CD8-positive, alpha-beta T cell (primary cell): ENCODE measurements at regions of chr2 and their contacts with region 1.

Region 1: DNA sequence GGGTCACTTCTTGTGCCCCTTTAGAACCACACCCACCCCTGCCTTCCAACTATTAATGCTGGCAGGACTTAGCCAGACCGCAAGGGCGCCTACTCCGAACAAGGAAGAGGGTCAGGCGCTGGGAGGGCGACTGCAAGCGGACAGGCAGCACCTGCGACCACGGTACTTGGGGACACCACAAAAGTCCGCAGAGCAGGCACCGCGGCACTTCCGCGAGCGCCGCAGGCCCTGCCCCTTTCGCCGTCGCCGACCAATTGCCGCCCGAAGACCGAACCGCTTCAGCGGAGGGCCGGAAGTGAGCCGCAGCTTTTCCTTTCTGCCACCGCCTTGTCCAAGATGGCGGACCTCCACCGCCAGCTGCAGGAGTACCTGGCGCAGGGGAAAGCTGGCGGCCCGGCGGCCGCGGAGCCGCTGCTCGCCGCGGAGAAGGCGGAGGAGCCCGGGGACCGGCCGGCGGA is at the start of gene SFT2D3:
- DNase-seq: peak; percentile 80 to 95 (median 89)
- ATAC-seq: peak; percentile 72
- H3K4me3 ChIP-seq: peak within 1 kb of the TSS; percentile 75 to 98
- H3K4me3 Mint-ChIP-seq: peak within 1 kb of the TSS; percentile 93
- H3K27ac ChIP-seq: peak within 1 kb of the TSS; percentile 92 to 96
- H3K27ac Mint-ChIP-seq: peak within 1 kb of the TSS; percentile 99
- H3K4me1 ChIP-seq: peaks cover 39% of the 10 kb centered on the region
- H3K4me1 Mint-ChIP-seq: peaks cover 46% of the 10 kb centered on the region
- H3K27me3 ChIP-seq: no peaks in the 10 kb centered on the region
- H3K27me3 Mint-ChIP-seq: no peaks in the 10 kb centered on the region
- CTCF ChIP-seq: no peak
- total RNA-seq, gene SFT2D3: 8.2 to 8.5 TPM

Region 2: GRCh38 chr2:127086990-127087790 is 614.0 kb before region 1 on chr2:
- CTCF ChIA-PET with region 1: no interaction called
- POLR2A ChIA-PET with region 1: no interaction called
- intact Hi-C with region 1: loop called in 1 of 2 experiments (anchors 10 kb)
- DNase-seq: no peak
- ATAC-seq: no peak
- H3K4me3 ChIP-seq: no peak overlapping the region
- H3K4me3 Mint-ChIP-seq: no peak overlapping the region
- H3K27ac ChIP-seq: peak overlapping the region in 1 of 2 experiments; percentile 51
- H3K27ac Mint-ChIP-seq: peak overlapping the region; percentile 84
- H3K4me1 ChIP-seq: peaks cover 53% of the 10 kb centered on the region
- H3K4me1 Mint-ChIP-seq: peaks cover 49% of the 10 kb centered on the region
- H3K27me3 ChIP-seq: no peaks in the 10 kb centered on the region
- H3K27me3 Mint-ChIP-seq: no peaks in the 10 kb centered on the region
- CTCF ChIP-seq: no peak

Region 3: DNA sequence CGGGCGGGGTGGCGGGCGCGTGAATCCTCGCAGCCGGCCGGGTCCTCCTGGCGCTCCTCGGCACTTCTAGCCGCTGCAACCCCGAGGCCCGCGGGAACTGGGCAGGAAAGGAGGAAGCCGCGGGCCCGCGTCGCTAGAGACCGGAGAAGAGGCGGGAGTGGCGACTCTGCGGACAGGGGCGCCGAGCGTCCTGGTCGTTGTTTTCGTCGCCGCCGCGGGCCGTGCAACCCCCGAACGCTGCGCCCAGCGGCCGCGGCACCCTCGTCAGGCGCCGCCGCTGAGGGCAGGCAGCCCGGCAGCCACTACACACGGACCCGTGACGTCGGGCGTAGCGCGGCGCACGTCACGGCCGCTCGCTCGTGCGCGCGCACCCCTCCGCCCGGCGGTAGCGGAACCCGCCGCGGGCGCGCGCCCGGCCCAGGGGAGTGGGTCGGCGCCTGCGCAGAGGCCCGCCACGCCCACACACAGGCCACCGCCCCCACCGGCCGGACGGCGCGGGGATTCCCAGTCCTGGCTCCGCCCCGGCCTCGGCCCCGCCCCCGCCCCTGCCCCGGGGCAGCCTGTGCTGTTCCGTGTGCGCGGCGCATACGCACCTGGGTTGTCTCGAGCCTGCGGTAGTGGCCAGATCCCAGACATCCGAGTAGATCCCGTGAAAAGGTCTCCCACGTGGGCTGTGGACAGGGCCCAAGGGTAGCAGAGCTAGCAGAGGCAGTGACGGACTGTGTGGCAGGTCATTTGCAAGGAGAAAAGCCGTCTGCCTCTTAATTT is 313.4 kb before region 1 on chr2 and contains the start of gene MAP3K2:
- CTCF ChIA-PET with region 1: no interaction called
- POLR2A ChIA-PET with region 1: no interaction called
- intact Hi-C with region 1: loop called (anchors 2 to 5 kb)
- DNase-seq: peak; percentile 90 to 98 (median 97)
- ATAC-seq: peak; percentile 72
- H3K4me3 ChIP-seq: peak within 1 kb of the TSS; percentile 79 to 81
- H3K4me3 Mint-ChIP-seq: peak within 1 kb of the TSS; percentile 86
- H3K27ac ChIP-seq: peak within 1 kb of the TSS; percentile 99
- H3K27ac Mint-ChIP-seq: peak within 1 kb of the TSS; percentile 99
- H3K4me1 ChIP-seq: peaks cover 36% of the 10 kb centered on the region
- H3K4me1 Mint-ChIP-seq: peaks cover 63% of the 10 kb centered on the region
- H3K27me3 ChIP-seq: no peaks in the 10 kb centered on the region
- H3K27me3 Mint-ChIP-seq: no peaks in the 10 kb centered on the region
- CTCF ChIP-seq: no peak
- total RNA-seq, gene MAP3K2: 126 to 137 TPM

Region 4: DNA sequence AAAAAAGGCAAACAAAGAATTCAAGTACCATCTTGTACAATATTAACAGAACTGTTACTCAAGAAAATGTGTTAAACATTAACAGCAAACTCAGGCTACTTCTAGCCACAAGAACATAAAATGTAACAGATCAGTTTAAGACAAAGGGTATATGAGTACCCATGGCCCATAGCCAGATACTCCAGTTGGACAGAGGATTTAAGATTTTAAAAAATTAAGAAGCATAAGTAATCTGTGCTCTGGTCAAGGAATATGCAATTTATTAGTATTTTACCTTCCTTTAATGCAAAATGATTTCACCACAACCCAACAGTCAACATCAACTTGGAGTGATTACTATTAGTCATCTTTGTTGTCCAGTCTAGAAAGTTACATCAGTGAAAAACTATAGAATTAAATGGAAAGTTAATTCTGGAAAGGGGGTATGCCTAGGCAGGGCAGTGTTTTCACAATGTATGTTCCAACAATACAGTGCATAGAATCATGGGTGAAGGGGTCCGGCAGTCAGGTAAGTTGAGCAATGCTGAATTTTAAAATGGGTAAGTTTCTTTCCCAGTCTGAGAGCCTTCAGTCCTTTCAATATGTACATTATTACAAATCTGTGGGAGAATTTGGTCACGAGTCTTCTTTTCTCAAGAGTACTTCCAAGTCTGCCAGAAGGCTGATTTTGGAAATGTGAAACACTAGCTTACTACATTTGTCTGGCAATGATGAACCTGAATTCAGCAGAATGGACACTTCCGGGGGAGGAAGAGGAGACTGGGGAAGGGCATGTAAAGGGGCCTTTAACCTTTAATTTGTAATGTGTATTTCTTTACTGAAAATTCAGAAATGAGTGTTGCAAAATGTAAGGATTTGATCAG is 34.5 kb after region 1 on chr2:
- CTCF ChIA-PET with region 1: no interaction called
- POLR2A ChIA-PET with region 1: no interaction called
- intact Hi-C with region 1: no loop called
- DNase-seq: no peak
- ATAC-seq: no peak
- H3K4me3 ChIP-seq: no peak overlapping the region
- H3K4me3 Mint-ChIP-seq: no peak overlapping the region
- H3K27ac ChIP-seq: no peak overlapping the region
- H3K27ac Mint-ChIP-seq: no peak overlapping the region
- H3K4me1 ChIP-seq: no peaks in the 10 kb centered on the region
- H3K4me1 Mint-ChIP-seq: no peaks in the 10 kb centered on the region
- H3K27me3 ChIP-seq: no peaks in the 10 kb centered on the region
- H3K27me3 Mint-ChIP-seq: no peaks in the 10 kb centered on the region
- CTCF ChIP-seq: no peak

Region 5: GRCh38 chr2:127810619-127811396 is 109.6 kb after region 1 on chr2 and contains the start of gene WDR33:
- CTCF ChIA-PET with region 1: no interaction called
- POLR2A ChIA-PET with region 1: interaction called, 7 read pairs
- intact Hi-C with region 1: loop called (anchors 1 to 2 kb)
- DNase-seq: peak; percentile 87 to 98 (median 95)
- ATAC-seq: peak; percentile 95
- H3K4me3 ChIP-seq: peak within 1 kb of the TSS; percentile 88 to 92
- H3K4me3 Mint-ChIP-seq: peak within 1 kb of the TSS; percentile 92
- H3K27ac ChIP-seq: peak within 1 kb of the TSS; percentile 95 to 98
- H3K27ac Mint-ChIP-seq: peak within 1 kb of the TSS; percentile 98
- H3K4me1 ChIP-seq: peaks cover 42% of the 10 kb centered on the region
- H3K4me1 Mint-ChIP-seq: peaks cover 51% of the 10 kb centered on the region
- H3K27me3 ChIP-seq: no peaks in the 10 kb centered on the region
- H3K27me3 Mint-ChIP-seq: no peaks in the 10 kb centered on the region
- CTCF ChIP-seq: no peak
- total RNA-seq, gene WDR33: 60.3 to 61.0 TPM

Region 6: DNA sequence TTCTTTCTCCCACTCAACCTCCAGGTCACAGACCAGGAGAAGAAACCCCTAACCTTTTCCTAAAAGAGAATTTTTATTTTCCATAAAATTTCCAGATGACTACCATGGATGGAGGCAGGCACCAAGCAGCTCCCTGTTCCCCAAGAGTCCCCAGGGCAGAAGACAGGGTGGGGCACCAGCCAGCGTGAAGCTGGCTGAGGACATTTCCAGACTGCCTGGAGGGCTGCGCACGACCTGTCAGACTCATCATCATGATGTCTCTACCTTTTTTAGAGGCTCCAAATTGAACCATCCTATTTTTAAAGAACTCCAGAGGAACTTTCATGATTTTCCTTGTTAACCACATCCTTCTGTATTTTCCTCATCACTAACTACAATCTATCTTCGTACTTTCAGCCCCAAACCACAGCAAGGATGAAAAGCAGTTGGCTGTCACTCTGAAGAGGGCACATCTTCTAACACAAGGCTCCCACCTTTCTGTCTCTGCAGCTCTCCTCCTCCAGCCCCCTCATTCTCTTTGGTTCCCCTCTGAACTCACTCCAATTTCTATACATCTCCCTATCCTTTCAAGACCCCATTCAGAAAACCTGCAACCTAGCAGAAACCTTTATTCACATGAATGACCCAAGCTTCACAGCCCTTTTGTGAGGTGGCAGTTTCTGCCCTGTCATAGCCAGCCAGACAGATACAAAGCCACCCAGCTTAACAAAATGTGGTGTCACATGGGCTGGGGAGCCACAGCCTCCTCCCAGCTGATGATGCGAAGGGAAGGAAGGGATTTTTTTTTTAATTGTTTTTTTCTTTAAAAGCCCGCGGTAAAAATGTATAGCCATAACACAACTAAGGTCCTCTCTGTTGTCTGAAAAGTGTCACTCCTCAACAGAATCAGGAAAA is 173.4 kb after region 1 on chr2:
- CTCF ChIA-PET with region 1: no interaction called
- POLR2A ChIA-PET with region 1: no interaction called
- intact Hi-C with region 1: loop called in 1 of 2 experiments (anchors 5 kb)
- DNase-seq: peak in 1 of 9 experiments; percentile 29
- ATAC-seq: no peak
- H3K4me3 ChIP-seq: no peak overlapping the region
- H3K4me3 Mint-ChIP-seq: no peak overlapping the region
- H3K27ac ChIP-seq: no peak overlapping the region
- H3K27ac Mint-ChIP-seq: peak overlapping the region; percentile 82
- H3K4me1 ChIP-seq: peaks cover 13% of the 10 kb centered on the region
- H3K4me1 Mint-ChIP-seq: peaks cover 44% of the 10 kb centered on the region
- H3K27me3 ChIP-seq: no peaks in the 10 kb centered on the region
- H3K27me3 Mint-ChIP-seq: no peaks in the 10 kb centered on the region
- CTCF ChIP-seq: no peak

Region 7: GRCh38 chr2:128321784-128322714 is 620.8 kb after region 1 on chr2:
- CTCF ChIA-PET with region 1: no interaction called
- POLR2A ChIA-PET with region 1: no interaction called
- intact Hi-C with region 1: loop called in 1 of 2 experiments (anchors 5 kb)
- DNase-seq: peak; percentile 66 to 89 (median 80)
- ATAC-seq: peak; percentile 68
- H3K4me3 ChIP-seq: peak overlapping the region; percentile 48 to 76
- H3K4me3 Mint-ChIP-seq: peak overlapping the region; percentile 74
- H3K27ac ChIP-seq: peak overlapping the region in 1 of 2 experiments; percentile 35
- H3K27ac Mint-ChIP-seq: no peak overlapping the region
- H3K4me1 ChIP-seq: peaks cover 15% of the 10 kb centered on the region
- H3K4me1 Mint-ChIP-seq: peaks cover 14% of the 10 kb centered on the region
- H3K27me3 ChIP-seq: peaks cover 0 to 3% of the 10 kb centered on the region in 2 experiments
- H3K27me3 Mint-ChIP-seq: no peaks in the 10 kb centered on the region
- CTCF ChIP-seq: peak; percentile 94